Mucosa of descending colon (tissue), 3 donors: ENCODE measurements at regions of chr6 and their contacts with region 1.

Region 1: GRCh38 chr6:138109042-138109997 is 2.1 kb upstream of the PERP start:
- DNase-seq: peak in 2 of 3 donors; percentile 73 to 94
- ATAC-seq: peak; percentile 47
- H3K4me3 ChIP-seq: no peak overlapping the region
- H3K4me1 ChIP-seq: peaks cover 6% of the 10 kb centered on the region
- CTCF ChIP-seq: peak; percentile 89

Region 2: GRCh38 chr6:138001750-138002349 is 107.5 kb before region 1 on chr6:
- intact Hi-C with region 1: loop called (anchors 2 to 5 kb)
- DNase-seq: peak in 2 of 3 donors; percentile 64 to 91
- ATAC-seq: peak; percentile 79
- H3K4me3 ChIP-seq: no peak overlapping the region
- H3K4me1 ChIP-seq: no peaks in the 10 kb centered on the region
- CTCF ChIP-seq: peak; percentile 56

Region 3: GRCh38 chr6:138240476-138241245 is 131.3 kb after region 1 on chr6:
- intact Hi-C with region 1: no loop called
- DNase-seq: no peak
- ATAC-seq: no peak
- H3K4me3 ChIP-seq: no peak overlapping the region
- H3K4me1 ChIP-seq: no peaks in the 10 kb centered on the region
- CTCF ChIP-seq: no peak